ENCODE measurements at regions of chr21 and their contacts with region 1.

Region 1: GRCh38 chr21:33947451-33948095 is 32.0 kb upstream of the ATP5PO start:
- DNase-seq: peak; percentile 61
- ATAC-seq: peak; percentile 92

Region 2: GRCh38 chr21:34017039-34017961 is 69.7 kb after region 1 on chr21:
- intact Hi-C with region 1: no loop called
- DNase-seq: no peak
- ATAC-seq: no peak

Region 3: GRCh38 chr21:34029743-34030528 is 82.4 kb after region 1 on chr21:
- intact Hi-C with region 1: no loop called
- DNase-seq: no peak
- ATAC-seq: peak; percentile 91

Region 4: GRCh38 chr21:34187935-34188334 is 240.4 kb after region 1 on chr21:
- intact Hi-C with region 1: loop called (anchors 10 kb)
- DNase-seq: peak; percentile 74
- ATAC-seq: peak; percentile 83

Region 5: DNA sequence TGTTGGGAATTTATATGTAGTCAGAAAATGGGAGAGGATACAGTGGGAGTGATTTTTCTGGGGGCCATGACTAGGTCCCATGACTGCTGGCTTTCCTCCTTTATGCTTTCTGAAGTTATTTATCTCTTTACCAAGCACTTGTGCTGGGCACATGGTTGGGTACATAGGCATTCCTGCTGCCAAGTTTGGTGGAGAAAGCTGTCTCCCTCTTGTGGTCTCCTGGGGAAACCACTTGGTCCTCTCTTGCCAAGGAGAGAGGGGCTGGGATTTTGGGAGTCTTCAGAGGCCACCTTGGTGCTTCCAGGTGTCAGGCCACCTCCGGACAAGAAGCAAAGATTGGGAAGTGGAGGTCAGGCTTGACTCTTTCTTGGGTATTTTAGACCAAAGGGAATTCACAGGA is 296.0 kb after region 1 on chr21:
- intact Hi-C with region 1: loop called (anchors 10 kb)
- DNase-seq: no peak
- ATAC-seq: peak; percentile 41